Prostate gland (tissue), 2 donors: ENCODE measurements at regions of chr14 and their contacts with region 1.

Region 1: DNA sequence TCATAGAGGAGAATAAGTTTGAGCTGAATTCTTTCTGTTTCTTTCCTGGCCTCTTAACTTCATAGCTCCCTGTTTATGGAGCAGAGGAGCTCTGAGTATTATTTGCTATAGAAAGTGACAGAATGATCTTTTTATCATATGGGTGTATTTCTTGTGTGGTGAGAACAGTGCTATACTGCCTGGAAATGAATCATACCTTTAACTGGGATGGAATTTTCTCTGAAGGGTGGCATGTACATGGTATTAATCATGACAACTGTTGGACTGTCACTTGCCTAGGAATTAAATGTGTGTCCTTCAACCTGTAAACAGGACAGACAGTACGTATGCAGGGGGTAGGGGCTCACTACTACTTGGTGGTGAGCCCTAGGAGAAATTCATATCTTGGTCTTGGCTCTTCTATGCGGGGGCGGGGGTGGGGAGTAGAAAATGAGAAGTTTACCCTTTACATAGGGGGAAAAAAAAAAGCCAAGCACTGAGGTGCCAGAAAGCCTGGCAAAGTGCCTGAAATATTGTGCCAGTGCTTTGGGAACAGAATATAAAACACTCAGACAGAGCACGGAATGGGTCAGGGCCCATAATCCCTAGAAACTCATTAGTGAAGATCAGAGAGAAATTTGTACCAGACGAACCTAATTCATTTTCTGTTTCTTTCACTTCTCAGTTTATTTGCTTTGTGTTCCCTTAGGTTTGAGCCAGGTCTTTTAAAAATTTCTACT is 33.8 kb downstream of the ARMH4 start:
- DNase-seq: no peak
- H3K4me3 ChIP-seq: no peak overlapping the region
- H3K27ac ChIP-seq: no peak overlapping the region
- H3K4me1 ChIP-seq: no peaks in the 10 kb centered on the region
- H3K27me3 ChIP-seq: no peaks in the 10 kb centered on the region
- CTCF ChIP-seq: no peak
- POLR2A ChIP-seq: no peak

Region 2: GRCh38 chr14:58152014-58152857 is 34.0 kb after region 1 on chr14 and contains the start of gene ARMH4:
- intact Hi-C with region 1: loop called (anchors 5 kb)
- DNase-seq: peak; percentile 87
- H3K4me3 ChIP-seq: peak within 1 kb of the TSS; percentile 56 to 57
- H3K27ac ChIP-seq: peak within 1 kb of the TSS; percentile 33 to 58
- H3K4me1 ChIP-seq: no peaks in the 10 kb centered on the region
- H3K27me3 ChIP-seq: no peaks in the 10 kb centered on the region
- CTCF ChIP-seq: peak in 2 of 4 experiments; percentile 41
- POLR2A ChIP-seq: peak; percentile 87
- total RNA-seq, gene ARMH4: 2.4 to 45.1 TPM